Uterus (tissue), 4 donors: ENCODE measurements at regions of chr20 and their contacts with region 1.

Region 1: DNA sequence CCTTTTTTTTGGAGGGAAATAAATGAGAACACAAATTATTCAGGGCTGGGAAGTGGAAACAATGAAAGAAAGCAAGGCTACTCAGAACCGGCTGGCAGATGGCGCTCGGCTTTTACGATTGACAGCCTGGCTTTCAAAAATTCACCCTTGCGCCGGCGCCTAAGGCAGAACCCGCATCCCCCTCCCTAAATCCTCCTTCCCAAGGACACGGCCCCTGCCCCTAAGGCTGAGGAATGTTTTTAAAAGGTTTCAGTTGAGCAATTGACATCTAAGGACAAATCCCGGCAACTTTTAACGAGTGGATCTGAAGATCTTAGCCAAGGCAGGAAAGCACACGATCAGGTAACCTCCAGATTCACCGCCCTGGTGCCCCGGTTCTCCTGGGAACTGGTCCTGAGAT is 16.3 kb downstream of the GNAS start:
- DNase-seq: no peak
- H3K4me3 ChIP-seq: no peak overlapping the region
- H3K27ac ChIP-seq: no peak overlapping the region
- H3K4me1 ChIP-seq: no peaks in the 10 kb centered on the region
- H3K27me3 ChIP-seq: no peaks in the 10 kb centered on the region
- CTCF ChIP-seq: peak in 1 of 4 experiments; percentile 6
- POLR2A ChIP-seq: no peak

Region 2: GRCh38 chr20:58755766-58756449 is 112.9 kb before region 1 on chr20:
- intact Hi-C with region 1: no loop called
- DNase-seq: no peak
- H3K4me3 ChIP-seq: no peak overlapping the region
- H3K27ac ChIP-seq: no peak overlapping the region
- H3K4me1 ChIP-seq: no peaks in the 10 kb centered on the region
- H3K27me3 ChIP-seq: no peaks in the 10 kb centered on the region
- CTCF ChIP-seq: no peak
- POLR2A ChIP-seq: no peak

Region 3: DNA sequence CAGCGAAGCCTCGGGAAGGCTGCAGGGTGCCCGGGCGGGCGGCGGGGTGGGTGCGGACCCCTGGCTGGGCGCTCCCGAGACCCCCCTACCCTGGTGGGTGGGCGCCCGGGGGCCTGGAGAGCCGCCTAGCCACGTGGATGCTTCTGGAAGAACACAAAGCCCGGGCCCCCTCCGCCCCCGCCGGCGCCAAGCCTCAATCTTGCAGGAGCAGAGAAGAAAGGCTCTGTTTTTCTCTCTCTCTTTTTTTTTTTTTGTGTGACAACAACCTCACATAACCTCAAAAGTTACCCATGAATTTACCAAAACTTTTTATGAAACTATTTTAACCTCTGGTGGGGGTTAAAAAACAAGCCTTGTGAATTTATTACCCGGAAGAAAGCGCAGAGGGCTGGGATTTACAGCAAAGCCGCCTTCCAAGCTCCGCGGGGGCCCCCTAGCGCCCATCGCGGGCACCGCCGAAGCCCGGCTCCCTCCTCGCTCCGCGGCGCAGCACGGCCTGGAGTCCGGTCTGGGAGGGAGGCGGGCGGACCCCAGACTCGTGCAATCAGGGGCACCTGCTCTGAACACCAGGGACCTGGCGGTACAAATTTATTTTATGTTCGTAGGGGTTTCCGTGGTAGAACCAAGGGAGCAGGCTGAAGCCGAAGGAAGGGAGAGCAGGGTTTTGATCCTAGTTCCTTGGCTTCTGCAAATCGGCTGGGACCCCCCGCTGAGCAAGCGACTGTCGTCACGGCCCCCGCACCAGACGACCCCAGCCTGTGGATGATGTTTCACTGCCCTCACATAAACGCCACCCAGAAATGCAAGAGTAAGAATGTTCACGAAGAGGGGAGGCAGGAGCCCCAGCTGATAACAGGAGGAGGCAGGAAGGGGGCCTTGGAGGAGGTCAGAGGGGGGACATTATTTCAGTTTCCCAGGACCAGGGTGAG is 353.7 kb after region 1 on chr20:
- intact Hi-C with region 1: loop called (anchors 10 kb)
- DNase-seq: peak; percentile 61 to 74
- H3K4me3 ChIP-seq: peak overlapping the region; percentile 43 to 52
- H3K27ac ChIP-seq: peak overlapping the region; percentile 18 to 65
- H3K4me1 ChIP-seq: no peaks in the 10 kb centered on the region
- H3K27me3 ChIP-seq: no peaks in the 10 kb centered on the region
- CTCF ChIP-seq: peak; percentile 88 to 95 (median 91)
- POLR2A ChIP-seq: no peak